PC-9 (cell line): ENCODE measurements at regions of chr4 and their contacts with region 1.

Region 1: GRCh38 chr4:153204247-153205027 is at the start of gene TRIM2:
- DNase-seq: peak; percentile 83 to 88
- H3K4me3 ChIP-seq: peak within 1 kb of the TSS; percentile 69
- H3K27ac ChIP-seq: peak within 1 kb of the TSS; percentile 83
- H3K4me1 ChIP-seq: peaks cover 15% of the 10 kb centered on the region
- H3K27me3 ChIP-seq: no peaks in the 10 kb centered on the region
- CTCF ChIP-seq: no peak
- total RNA-seq, gene TRIM2: 56.0 and 87.0 TPM in 2 replicates

Region 2: GRCh38 chr4:153142700-153143438 is 61.6 kb before region 1 on chr4:
- CTCF ChIA-PET with region 1: interaction called, 4 read pairs
- POLR2A ChIA-PET with region 1: interaction called, 4 read pairs
- intact Hi-C with region 1: loop called (anchors 5 kb)
- DNase-seq: peak; percentile 52 to 62
- H3K4me3 ChIP-seq: peak overlapping the region; percentile 29; the same call in 1 of the 2 replicates
- H3K27ac ChIP-seq: peak overlapping the region; percentile 82
- H3K4me1 ChIP-seq: peaks cover 31% of the 10 kb centered on the region
- H3K27me3 ChIP-seq: no peaks in the 10 kb centered on the region
- CTCF ChIP-seq: peak; percentile 82

Region 3: DNA sequence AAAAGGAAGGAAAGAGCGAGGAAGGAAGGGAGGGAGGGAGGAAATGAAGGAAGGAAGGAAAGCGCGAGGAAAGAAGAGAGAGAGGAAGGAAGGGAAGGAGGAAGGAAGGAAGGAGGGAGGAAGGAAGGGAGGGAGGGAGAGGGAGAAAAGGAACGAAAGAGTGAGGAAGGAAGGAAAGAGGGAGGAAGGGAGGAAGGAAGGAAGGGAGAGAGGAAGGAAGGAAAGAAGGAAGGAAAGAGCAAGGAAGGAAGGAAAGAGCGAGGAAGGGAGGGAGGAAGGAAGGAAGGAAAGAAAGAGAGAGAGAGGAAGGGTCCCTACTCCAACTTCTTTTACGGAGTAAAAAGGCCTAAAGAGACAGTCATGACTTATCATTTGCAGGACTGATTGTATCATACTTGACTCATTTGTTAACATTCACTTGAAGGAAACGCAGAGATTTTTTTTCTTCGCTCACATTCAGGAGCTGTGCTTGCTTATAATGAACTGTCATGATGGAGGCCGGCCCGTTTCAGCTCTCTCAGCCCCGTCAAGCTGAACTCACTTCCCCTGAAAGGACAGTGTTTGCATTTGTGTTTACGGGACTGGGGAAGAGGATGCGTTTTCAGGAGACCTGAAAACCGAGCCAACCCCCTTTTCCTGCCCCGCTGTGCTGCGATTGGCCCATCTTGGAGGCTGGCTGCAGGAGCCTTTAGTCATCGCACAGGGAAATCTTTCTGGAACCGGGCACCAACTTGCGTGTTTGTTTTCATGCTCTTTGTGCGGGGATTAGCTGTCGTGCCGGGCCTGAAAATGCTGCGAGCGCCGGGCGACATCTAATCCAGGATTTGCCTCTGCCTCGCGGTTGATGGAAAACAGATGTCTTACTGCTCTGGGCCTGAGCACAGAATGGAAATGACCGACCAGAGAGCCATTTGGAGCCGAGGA is 17.6 kb after region 1 on chr4:
- CTCF ChIA-PET with region 1: no interaction called
- POLR2A ChIA-PET with region 1: interaction called, 4 read pairs
- intact Hi-C with region 1: loop called (anchors 1 kb)
- DNase-seq: no peak
- H3K4me3 ChIP-seq: no peak overlapping the region
- H3K27ac ChIP-seq: no peak overlapping the region
- H3K4me1 ChIP-seq: peaks cover 43% of the 10 kb centered on the region
- H3K27me3 ChIP-seq: no peaks in the 10 kb centered on the region
- CTCF ChIP-seq: no peak

Region 4: DNA sequence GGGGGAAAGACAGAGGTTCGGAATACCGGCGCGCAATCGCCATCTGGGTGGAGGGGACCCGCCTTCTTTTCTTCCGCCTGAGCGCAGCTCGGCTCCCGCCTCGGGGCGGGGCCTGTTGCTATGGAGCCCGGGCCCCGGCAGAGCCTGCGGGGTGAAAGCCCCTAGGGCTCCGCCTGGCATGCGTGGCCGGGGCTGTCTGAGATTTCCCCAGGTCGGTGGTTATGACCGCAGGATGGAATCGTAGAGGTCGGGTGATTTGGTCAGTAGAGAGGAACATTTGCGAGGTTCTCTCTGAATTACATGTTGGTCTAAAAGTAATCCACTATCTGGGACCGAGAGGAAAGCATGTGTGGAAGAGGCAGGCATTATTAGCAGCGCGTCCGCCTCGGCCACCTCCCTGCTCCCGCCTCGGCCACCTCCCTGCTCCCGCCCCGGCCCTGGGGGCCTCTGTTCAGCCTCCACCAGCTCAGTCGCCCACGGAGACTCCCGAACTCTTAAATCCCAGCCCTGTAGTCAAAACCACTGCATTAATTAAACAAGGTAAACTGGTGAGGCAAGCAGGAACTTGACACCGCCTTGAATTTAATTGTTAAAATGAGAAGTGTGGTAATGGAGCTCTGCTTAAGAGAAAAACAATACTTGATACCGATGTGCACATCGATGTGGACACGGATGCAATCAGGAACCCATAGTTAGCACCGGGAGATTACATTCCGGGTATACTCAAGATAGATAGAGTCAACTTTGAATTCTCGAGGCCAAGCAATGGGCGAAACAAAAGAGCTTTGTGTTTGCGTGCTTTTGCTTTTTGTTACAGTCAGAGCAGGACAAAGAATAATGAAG is 45.0 kb after region 1 on chr4:
- CTCF ChIA-PET with region 1: interaction called, 3 read pairs
- POLR2A ChIA-PET with region 1: interaction called, 5 read pairs
- intact Hi-C with region 1: loop called (anchors 2 kb)
- DNase-seq: peak; percentile 79 to 89
- H3K4me3 ChIP-seq: peak overlapping the region; percentile 70
- H3K27ac ChIP-seq: peak overlapping the region; percentile 66
- H3K4me1 ChIP-seq: peaks cover 25% of the 10 kb centered on the region
- H3K27me3 ChIP-seq: no peaks in the 10 kb centered on the region
- CTCF ChIP-seq: no peak

Region 5: GRCh38 chr4:153318696-153319320 is 114.4 kb after region 1 on chr4:
- CTCF ChIA-PET with region 1: no interaction called
- POLR2A ChIA-PET with region 1: no interaction called
- intact Hi-C with region 1: loop called (anchors 5 kb)
- DNase-seq: peak in 1 of 2 experiments; percentile 8
- H3K4me3 ChIP-seq: no peak overlapping the region
- H3K27ac ChIP-seq: no peak overlapping the region
- H3K4me1 ChIP-seq: no peaks in the 10 kb centered on the region
- H3K27me3 ChIP-seq: no peaks in the 10 kb centered on the region
- CTCF ChIP-seq: peak; percentile 69

Region 6: DNA sequence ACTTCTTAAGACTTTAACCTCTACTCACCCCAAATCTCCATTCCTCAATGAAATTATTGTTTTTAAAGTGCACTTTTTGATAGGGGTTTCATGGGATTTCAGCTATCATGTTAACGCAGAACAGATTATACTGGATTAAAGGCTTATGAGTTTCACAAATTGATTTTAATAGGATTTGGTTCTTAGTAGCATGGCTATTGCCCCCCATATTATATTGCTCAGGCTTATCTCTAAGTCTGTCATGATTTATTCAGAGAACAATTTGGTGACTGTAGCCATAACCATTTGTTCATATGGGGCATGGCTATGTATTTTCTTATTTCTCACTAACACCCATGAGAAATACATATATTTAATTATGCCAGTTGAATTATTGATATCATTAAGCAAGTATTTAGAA is 197.1 kb after region 1 on chr4:
- CTCF ChIA-PET with region 1: no interaction called
- POLR2A ChIA-PET with region 1: interaction called, 11 read pairs
- intact Hi-C with region 1: no loop called
- DNase-seq: no peak
- H3K4me3 ChIP-seq: no peak overlapping the region
- H3K27ac ChIP-seq: no peak overlapping the region
- H3K4me1 ChIP-seq: no peaks in the 10 kb centered on the region
- H3K27me3 ChIP-seq: no peaks in the 10 kb centered on the region
- CTCF ChIP-seq: no peak